ENCODE measurements at regions of chr17 and their contacts with region 1.

Region 1: GRCh38 chr17:30716461-30717300 is 107.8 kb downstream of the CRLF3 start:
- DNase-seq: no peak
- CTCF ChIP-seq: peak; percentile 47

Region 2: DNA sequence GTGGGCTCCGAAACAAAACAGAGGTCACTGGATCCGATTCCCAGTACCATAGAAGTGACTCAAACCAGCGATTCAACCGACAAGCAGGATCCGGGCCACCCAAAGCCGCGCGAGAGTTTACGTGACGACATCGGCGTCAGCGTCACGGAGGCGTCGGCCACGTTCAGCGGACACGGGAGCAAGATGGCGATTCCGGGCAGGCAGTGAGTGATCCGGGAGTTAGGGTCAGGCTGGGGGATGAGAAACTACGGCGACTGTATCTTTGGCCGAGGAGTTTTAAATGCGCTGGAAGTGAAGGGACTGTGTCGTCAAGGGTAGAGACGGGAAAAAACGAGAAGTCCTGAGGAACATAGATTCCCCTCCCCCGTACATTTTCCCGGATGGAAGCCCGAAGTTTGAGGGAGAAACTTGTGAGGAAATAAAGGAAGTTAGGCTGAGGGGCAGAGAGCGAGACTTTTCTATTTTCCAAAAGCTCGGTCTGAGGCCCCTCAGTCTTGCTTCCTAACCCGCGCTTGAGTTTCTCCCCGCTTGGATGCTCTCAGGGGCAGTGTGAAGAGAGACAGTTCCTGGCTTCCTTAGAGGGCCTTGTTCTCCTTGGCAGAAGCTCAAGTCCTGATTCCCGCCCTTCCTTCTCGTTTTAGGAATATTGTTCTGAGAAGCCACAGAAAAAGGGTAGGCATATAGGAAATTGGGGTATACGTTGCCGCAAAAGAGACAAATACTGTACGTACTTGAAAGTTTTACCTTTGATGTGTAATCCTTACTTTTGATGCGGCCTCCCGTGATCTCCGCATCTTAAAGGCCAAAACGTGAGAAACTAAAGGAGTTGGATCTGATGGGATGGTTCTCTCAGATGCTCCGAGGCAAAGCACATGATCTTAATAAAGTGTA is 599.8 kb before region 1 on chr17 and contains the start of gene NSRP1:
- in situ Hi-C with region 1: loop called (anchors 25 kb)
- DNase-seq: peak; percentile 91
- CTCF ChIP-seq: no peak

Region 3: DNA sequence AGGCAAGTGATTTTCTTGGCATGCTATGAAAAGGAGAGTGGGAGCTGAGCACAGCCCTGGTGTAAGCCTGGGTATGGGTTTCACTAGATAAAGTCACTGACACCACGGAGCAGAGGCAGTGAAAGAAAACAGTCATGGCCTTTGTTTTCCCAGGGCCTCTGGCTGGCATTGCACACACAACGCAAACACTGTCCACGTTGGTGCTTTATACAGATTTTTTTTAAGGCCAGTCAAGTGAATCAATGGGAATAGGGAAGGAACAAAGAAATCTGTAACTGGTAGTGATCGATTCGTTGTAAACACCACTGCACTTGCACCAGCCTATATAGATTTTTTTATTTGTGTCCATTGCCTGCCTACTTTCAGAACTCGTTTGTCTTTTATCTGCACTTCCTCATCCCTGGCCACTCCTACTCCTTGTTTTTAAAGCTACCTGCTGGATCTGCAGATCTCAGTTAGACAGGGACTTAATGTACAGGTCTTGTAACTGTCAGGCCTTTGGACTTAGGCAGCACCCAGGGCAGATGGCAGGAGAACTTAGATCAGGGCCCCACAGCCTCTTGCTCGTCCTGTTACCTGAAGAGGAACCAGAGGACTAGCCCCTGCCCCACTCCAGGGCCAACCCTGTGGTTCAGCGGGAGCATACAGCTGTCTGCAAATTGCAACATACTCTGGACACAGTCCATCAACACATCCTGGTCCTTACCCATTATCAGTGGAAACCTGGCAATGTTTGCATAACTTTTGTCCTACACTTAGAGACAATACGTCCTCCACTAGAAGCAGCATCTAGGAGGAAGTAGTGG is 372.2 kb before region 1 on chr17:
- in situ Hi-C with region 1: loop called (anchors 10 kb)
- DNase-seq: no peak
- CTCF ChIP-seq: no peak

Measured in GM13976 (cell line).